ENCODE measurements at regions of chr7 and their contacts with region 1.

Region 1: DNA sequence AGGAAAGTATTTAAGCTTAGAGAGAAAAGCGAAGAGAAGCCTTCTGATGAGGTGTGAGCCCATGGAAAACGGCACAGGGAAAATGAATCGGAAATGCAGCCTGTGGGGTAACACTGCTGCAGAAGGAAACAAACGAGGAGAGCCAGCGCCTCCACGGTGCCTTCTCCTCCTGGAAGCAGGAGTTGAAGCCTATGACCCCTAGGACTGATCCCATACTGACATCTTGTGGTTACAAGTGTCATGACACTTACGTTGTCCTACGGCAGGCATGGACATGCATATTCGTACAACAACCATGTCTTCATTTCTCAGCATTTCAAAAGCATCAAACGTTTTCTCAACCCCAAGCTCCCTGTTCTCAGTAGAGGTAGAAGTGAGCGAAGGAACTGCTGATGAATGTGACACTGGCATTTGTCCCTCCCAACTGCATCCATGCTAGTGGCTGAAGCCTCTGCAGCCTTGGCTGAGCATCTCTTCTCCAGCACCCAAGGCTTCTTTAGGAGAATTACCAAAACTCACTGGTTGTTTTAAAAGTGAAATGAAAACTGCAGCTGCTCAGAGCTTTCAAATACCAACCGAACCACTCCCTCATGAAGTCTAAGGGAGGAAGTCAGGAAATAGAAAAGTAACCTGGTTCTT is 160.2 kb downstream of the JAZF1 start:
- DNase-seq: peak; percentile 76
- H3K4me3 ChIP-seq: no peak overlapping the region
- H3K27ac ChIP-seq: no peak overlapping the region
- H3K4me1 ChIP-seq: no peaks in the 10 kb centered on the region
- H3K27me3 ChIP-seq: no peaks in the 10 kb centered on the region
- CTCF ChIP-seq: peak; percentile 59 to 91 (median 90)
- POLR2A ChIP-seq: no peak

Region 2: DNA sequence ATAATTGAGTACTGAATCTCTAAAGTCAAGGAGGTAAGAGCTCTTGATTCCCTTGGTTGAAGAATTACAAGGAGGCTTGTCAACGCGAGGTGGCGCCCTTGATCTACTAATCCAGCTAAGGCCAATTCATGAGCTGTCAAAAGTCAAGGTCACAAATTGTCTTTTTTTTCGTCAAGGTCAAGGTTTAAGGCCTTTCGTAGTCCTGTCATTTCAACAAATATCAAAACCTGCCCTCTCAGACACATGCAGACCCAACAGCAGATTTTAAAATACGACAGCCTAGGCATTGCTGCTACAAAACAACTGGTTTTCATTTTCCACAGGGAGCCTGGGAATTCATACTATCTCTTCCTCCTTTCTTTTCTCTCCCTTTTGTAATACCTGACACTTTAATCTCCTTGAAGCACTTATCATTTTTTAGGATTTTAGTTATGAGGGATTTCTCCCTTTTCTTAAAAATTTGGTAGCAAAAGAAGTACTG is 824.1 kb before region 1 on chr7:
- intact Hi-C with region 1: loop called (anchors 5 kb)
- DNase-seq: peak; percentile 95
- H3K4me3 ChIP-seq: peak overlapping the region; percentile 76 to 81
- H3K27ac ChIP-seq: peak overlapping the region; percentile 96 to 97
- H3K4me1 ChIP-seq: no peaks in the 10 kb centered on the region
- H3K27me3 ChIP-seq: no peaks in the 10 kb centered on the region
- CTCF ChIP-seq: peak; percentile 80 to 87 (median 84)
- POLR2A ChIP-seq: no peak